ENCODE measurements at regions of chr1 and their contacts with region 1.

Region 1: GRCh38 chr1:65459397-65459768 is 38.9 kb downstream of the LEPR start:
- H3K4me3 Mint-ChIP-seq: no peak overlapping the region
- H3K27ac Mint-ChIP-seq: no peak overlapping the region
- H3K4me1 Mint-ChIP-seq: no peaks in the 10 kb centered on the region
- H3K27me3 Mint-ChIP-seq: no peaks in the 10 kb centered on the region

Region 2: DNA sequence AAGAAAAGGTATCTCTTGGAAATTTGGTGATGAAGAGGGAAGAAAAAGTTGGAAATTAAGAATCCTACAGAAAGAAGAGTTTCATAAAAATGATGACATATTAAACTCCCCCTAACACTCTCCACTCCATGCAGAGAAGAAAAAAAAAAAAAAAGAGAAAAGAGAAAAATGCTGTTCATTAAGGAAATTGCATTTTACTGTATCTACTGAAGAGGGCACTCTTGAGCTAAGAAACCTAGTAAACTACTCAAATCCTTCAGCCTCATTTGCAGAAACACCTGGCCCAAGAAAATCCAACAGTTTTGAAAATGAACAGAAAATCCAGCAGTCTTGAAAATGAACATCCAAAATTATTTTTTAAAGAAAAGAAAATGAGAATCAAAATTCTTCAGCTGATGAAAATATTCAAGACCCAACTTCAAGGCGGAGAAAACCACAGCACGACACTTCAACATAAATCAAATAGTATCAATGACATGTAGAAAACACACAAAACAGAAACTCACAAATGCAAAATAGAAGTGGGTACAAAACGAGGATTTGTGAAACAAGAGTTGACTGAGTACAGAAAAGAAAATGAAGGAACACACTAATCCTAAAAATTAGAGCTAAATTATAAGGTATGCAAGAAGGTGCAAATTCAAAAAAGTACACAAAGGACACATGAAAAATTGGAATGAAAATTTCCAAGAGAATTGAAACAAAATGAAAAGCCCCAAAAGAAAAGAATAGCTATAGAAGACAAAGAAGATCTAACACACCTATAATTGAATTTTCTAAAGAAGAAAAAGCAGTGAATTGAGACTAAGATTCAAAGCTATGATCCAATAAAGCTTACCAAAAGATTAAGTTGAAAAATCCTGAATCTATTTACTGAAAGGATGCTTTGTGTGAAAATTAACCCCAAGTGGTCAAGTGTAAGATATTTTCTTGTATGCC is 223.2 kb before region 1 on chr1:
- intact Hi-C with region 1: loop called (anchors 1 kb)
- H3K4me3 Mint-ChIP-seq: no peak overlapping the region
- H3K27ac Mint-ChIP-seq: no peak overlapping the region
- H3K4me1 Mint-ChIP-seq: no peaks in the 10 kb centered on the region
- H3K27me3 Mint-ChIP-seq: no peaks in the 10 kb centered on the region